AG04450 (cell line): ENCODE measurements at regions of chr10 and their contacts with region 1.

Region 1: GRCh38 chr10:74081192-74081803 is 69.3 kb downstream of the AP3M1 start:
- DNase-seq: no peak
- H3K4me3 ChIP-seq: no peak overlapping the region
- H3K27ac ChIP-seq: no peak overlapping the region
- H3K27me3 ChIP-seq: no peaks in the 10 kb centered on the region
- CTCF ChIP-seq: peak; percentile 88

Region 2: DNA sequence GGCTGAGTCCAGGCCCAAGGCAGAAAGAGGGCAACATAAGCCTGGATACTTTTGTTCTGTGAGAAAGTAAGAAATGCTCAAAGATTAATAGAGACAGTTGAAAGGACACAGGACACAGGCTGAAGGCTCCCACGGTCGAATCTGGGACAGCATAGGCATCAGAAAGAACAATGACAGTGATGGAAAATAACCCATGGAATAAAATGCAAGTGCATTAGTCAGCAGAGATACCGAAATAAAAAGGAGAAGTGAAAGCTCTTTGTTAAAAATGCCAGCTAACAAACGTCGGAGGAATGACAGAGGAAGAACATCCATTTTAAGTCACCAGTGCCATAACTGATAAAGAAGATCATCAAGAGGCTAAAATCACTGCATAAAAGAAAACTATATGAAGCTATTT is 363.7 kb before region 1 on chr10:
- CTCF ChIA-PET with region 1: no interaction called
- POLR2A ChIA-PET with region 1: no interaction called
- DNase-seq: no peak
- H3K4me3 ChIP-seq: no peak overlapping the region
- H3K27ac ChIP-seq: no peak overlapping the region
- H3K27me3 ChIP-seq: no peaks in the 10 kb centered on the region
- CTCF ChIP-seq: no peak

Region 3: DNA sequence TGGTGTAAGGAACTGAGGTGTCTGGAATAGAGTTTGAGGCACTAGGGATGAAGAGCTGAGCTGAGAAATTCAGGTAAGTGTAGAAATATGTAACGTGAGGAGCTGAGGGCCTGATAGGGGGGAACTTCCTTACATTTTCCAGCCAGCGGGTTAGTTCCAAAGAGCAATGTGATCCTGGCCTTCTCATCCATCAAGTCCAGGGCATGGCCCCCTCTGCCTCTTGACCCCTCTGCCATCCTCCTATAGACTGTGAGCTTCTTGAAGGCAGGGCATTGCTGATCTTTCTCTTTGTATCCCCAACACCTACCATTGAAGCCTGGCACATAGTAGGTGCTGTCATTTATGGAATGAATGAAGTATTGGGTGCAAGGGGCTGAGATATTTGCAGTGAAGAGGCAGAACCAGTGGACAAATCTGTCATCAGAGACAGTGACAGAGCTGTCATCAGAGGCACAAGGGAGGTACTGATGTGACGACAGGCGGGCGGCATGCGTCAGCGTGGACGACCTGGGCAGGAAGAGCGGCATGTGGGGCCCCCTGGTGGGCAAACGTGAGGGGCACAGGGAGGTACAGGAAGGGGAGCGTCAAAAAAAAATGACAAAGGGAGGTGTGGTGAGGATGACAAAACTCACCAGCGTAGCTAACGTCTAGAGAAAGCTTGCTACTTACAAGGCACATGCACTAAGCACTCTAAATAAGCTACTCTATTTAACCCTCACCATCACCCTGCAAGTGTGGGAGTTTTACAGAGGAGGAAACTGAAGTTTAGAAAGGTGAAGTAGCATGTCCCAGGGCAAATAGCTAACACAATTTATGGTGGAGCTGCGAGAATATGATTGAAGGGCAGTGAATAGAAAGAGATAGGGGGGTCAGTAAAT is 201.8 kb before region 1 on chr10:
- CTCF ChIA-PET with region 1: interaction called, 23 read pairs
- POLR2A ChIA-PET with region 1: no interaction called
- DNase-seq: no peak
- H3K4me3 ChIP-seq: no peak overlapping the region
- H3K27ac ChIP-seq: no peak overlapping the region
- H3K27me3 ChIP-seq: no peaks in the 10 kb centered on the region
- CTCF ChIP-seq: peak; percentile 91

Region 4: DNA sequence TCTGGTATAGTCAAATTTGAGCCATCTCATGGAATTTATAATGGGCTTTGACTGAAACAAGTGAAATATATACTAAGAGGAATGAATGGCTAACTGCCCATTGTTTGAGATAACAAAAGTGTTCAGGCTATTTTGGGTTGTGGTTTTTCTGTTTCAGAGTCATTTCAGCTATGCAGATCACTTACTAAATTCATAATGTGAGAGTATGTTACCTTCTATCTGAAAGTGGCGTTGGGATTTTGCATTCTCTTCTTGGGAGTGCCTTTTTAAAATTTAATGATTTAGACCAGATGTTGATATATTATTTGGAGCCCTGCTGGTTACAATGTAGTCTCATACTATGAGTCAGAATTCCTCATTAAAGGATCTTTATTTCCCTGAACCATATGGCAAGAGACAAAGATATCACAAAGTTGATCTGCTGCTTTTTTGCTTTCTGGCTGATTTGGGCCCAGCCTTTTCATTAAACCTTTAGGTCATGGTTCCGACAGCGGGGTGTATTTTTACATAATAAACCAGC is 73.0 kb before region 1 on chr10:
- CTCF ChIA-PET with region 1: interaction called, 16 read pairs
- POLR2A ChIA-PET with region 1: no interaction called
- DNase-seq: peak; percentile 54
- H3K4me3 ChIP-seq: peak overlapping the region; percentile 8; the same call in 1 of the 2 replicates
- H3K27ac ChIP-seq: peak overlapping the region; percentile 77
- H3K27me3 ChIP-seq: no peaks in the 10 kb centered on the region
- CTCF ChIP-seq: no peak

Region 5: GRCh38 chr10:74021248-74022055 is 59.8 kb before region 1 on chr10:
- CTCF ChIA-PET with region 1: interaction called, 14 read pairs
- POLR2A ChIA-PET with region 1: no interaction called
- DNase-seq: peak; percentile 74
- H3K4me3 ChIP-seq: peak overlapping the region; percentile 23; the same call in 1 of the 2 replicates
- H3K27ac ChIP-seq: peak overlapping the region; percentile 81
- H3K27me3 ChIP-seq: no peaks in the 10 kb centered on the region
- CTCF ChIP-seq: no peak

Region 6: GRCh38 chr10:74026428-74027015 is 54.8 kb before region 1 on chr10:
- CTCF ChIA-PET with region 1: interaction called, 14 read pairs
- POLR2A ChIA-PET with region 1: interaction called, 5 read pairs
- DNase-seq: no peak
- H3K4me3 ChIP-seq: no peak overlapping the region
- H3K27ac ChIP-seq: no peak overlapping the region
- H3K27me3 ChIP-seq: no peaks in the 10 kb centered on the region
- CTCF ChIP-seq: no peak

Region 7: GRCh38 chr10:74071157-74071556 is 10.1 kb before region 1 on chr10:
- CTCF ChIA-PET with region 1: interaction called, 17 read pairs
- POLR2A ChIA-PET with region 1: no interaction called
- DNase-seq: peak; percentile 82
- H3K4me3 ChIP-seq: no peak overlapping the region
- H3K27ac ChIP-seq: peak overlapping the region; percentile 68
- H3K27me3 ChIP-seq: no peaks in the 10 kb centered on the region
- CTCF ChIP-seq: no peak